ENCODE measurements at regions of chr3 and their contacts with region 1.

Region 1: GRCh38 chr3:122004991-122005565 is 17.0 kb downstream of the ILDR1 start:
- DNase-seq: no peak
- H3K4me3 ChIP-seq: no peak overlapping the region
- H3K27ac ChIP-seq: no peak overlapping the region
- H3K4me1 ChIP-seq: peaks cover 55% of the 10 kb centered on the region
- CTCF ChIP-seq: no peak

Region 2: DNA sequence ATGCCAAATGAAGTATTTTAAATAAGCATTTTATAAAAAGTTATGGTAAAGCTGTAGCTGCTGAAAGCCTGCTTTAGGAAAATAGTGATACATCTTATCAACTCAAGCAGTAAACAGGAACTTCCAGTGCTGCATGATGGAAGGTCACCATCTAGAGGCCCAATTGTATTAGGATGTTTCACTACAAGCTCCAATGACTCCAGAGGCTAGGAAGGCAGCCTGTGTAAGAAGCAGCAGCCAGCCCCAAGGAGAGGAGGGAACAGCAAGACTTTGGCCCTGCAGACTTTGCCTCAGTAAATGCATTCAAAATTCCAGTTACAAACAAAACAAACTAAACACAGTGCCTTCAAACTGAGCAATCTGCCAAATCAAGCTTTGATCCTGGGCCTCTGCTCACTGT is 15.1 kb before region 1 on chr3:
- CTCF ChIA-PET with region 1: interaction called, 5 read pairs
- POLR2A ChIA-PET with region 1: interaction called, 12 read pairs
- intact Hi-C with region 1: no loop called
- DNase-seq: peak; percentile 65
- H3K4me3 ChIP-seq: no peak overlapping the region
- H3K27ac ChIP-seq: peak overlapping the region; percentile 15
- H3K4me1 ChIP-seq: peaks cover 72% of the 10 kb centered on the region
- CTCF ChIP-seq: peak; percentile 68

Region 3: GRCh38 chr3:122067214-122067550 is 62.1 kb after region 1 on chr3:
- CTCF ChIA-PET with region 1: no interaction called
- POLR2A ChIA-PET with region 1: interaction called, 15 read pairs
- intact Hi-C with region 1: no loop called
- DNase-seq: peak; percentile 39
- H3K4me3 ChIP-seq: peak overlapping the region; percentile 57
- H3K27ac ChIP-seq: peak overlapping the region; percentile 72
- H3K4me1 ChIP-seq: peaks cover 88% of the 10 kb centered on the region
- CTCF ChIP-seq: no peak

Region 4: GRCh38 chr3:122074621-122075265 is 69.7 kb after region 1 on chr3:
- CTCF ChIA-PET with region 1: no interaction called
- POLR2A ChIA-PET with region 1: interaction called, 22 read pairs
- intact Hi-C with region 1: no loop called
- DNase-seq: peak; percentile 64
- H3K4me3 ChIP-seq: peak overlapping the region; percentile 71
- H3K27ac ChIP-seq: peak overlapping the region; percentile 81
- H3K4me1 ChIP-seq: peaks cover 69% of the 10 kb centered on the region
- CTCF ChIP-seq: no peak

Region 5: DNA sequence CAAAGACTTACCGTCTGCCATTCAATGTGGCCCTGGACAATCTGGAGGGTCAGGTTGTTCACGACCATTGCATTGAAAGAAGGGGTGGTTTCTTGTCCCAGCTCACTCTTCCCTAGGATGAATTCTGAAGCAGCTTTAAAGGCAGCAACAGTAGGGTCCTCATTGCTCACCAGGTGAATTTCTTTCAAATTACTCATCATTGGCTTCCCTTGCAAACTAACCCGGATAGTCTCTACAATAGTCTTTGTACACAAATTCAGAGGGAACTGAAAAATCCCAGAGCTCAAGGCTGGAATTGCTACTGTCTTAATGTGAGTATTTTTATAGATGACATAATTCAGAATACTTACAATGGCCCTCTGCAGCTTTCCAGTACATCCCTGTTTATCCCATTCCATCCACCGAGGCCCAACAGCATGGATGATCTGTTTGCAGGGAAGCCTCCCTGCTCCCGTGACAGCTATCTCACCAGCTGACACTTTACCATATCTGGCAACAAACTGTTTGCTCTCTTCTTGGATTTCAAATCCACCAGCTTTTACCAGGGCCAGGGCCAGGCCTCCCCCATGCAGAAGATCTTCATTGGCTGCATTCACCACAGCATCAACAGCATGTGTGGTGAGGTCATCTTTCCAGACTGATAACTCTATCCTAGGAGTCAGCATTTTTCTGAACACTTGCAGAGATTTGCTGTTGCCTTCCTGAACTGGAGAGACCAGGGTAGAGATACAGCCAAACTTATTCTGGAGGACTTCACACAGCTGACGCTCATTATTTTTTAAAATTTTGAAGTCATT is 550.4 kb after region 1 on chr3:
- CTCF ChIA-PET with region 1: no interaction called
- POLR2A ChIA-PET with region 1: no interaction called
- intact Hi-C with region 1: no loop called
- DNase-seq: no peak
- H3K4me3 ChIP-seq: no peak overlapping the region
- H3K27ac ChIP-seq: no peak overlapping the region
- H3K4me1 ChIP-seq: no peaks in the 10 kb centered on the region
- CTCF ChIP-seq: no peak